Mucosa of descending colon (tissue), 3 donors: ENCODE measurements at regions of chr12 and their contacts with region 1.

Region 1: GRCh38 chr12:5083955-5084849 is 40.5 kb downstream of the KCNA5 start:
- DNase-seq: peak in 1 of 3 donors; percentile 68
- ATAC-seq: peak; percentile 51
- H3K4me3 ChIP-seq: no peak overlapping the region
- H3K4me1 ChIP-seq: no peaks in the 10 kb centered on the region
- CTCF ChIP-seq: no peak

Region 2: DNA sequence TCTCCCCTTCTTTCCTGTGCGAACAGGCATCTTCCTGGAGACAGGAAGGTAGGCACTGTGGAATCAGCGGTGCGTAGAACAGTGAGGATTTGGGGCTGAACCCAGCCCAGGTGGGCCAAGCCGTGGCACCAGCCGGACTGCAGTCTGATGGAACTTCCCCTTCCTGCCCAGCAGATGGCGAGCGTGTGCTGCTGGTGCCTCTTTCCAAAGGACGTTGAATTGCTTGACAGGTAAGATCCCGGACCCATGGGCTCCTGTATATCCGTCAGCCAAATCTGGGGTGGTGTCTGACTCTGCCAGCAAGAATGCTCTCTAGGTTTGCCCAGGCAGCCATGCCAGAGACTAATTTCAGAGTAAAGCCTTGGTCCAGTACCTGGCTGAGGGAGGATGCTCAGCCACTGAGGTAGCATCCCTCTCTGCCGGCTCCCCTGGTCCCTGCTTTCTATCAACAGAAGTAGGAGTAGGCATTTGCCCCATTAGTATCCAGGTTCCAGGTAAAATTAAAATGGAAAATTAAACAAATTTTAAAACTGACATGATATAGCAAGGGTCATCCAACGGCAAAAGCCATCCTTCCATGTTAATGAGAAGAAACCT is 61.6 kb before region 1 on chr12:
- intact Hi-C with region 1: loop called (anchors 5 to 10 kb)
- DNase-seq: peak in 2 of 3 donors; percentile 26 to 35
- ATAC-seq: peak; percentile 69
- H3K4me3 ChIP-seq: no peak overlapping the region
- H3K4me1 ChIP-seq: no peaks in the 10 kb centered on the region
- CTCF ChIP-seq: peak; percentile 83

Region 3: DNA sequence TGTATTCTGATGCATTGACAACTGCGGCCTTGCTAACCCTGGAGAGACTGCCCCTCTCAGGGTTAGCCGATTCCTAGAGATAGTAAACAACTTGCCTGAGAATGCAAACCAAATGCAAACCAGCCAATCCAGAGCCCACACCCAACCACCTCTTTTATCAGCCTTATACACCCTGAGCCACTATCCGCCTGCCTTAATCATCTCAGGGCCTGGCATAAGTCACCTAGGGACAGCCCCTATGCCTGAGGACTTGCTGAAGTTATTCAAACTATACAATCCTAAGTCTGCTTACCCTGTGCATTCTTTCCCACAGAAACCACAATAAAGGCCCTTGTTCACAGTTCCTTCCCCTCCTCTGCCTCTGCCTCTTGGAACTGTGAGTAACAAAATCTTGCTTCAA is 136.6 kb after region 1 on chr12:
- intact Hi-C with region 1: no loop called
- DNase-seq: no peak
- ATAC-seq: no peak
- H3K4me3 ChIP-seq: no peak overlapping the region
- H3K4me1 ChIP-seq: no peaks in the 10 kb centered on the region
- CTCF ChIP-seq: no peak